ENCODE measurements at regions of chr16 and their contacts with region 1.

Region 1: DNA sequence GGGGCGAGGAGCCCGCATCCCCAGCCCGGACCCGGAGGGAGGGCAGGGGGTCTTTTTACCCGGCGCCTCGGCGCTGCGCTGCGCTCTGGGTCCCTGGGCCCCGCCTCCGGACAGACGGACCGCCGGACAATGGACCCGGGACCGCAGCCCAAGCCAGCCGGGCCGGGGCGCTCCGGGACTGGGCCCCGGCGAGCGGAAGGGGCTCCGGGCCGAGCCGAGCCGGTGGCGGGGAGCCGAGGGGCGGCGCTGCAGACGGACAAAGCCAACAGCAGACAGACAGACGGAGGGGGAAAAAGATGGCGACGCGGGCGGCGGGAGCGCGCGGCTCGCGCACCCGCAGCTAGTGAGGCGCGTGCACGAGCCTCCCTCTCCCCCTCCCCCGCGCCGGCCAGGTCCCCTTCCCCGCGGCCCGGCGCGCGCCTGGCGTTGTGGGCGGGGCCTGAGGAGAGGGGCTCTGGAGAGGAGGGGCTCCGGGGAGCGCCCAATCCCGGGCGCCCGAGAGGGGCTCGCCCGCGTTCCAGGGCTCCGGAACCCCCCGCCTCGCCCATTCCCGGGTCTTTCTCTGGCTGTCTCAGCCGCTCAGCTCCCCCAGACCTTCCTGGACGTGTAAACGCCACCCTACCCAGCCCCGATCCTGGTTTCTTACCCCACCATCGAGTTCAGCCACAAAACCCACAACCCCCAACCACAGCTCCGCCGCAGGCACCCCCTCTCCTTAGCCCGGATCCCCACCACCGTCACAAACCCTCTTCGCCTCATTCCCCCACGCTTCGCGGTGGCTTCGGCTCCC is at the start of gene ZNF821:
- DNase-seq: peak; percentile 81
- ATAC-seq: peak; percentile 48
- H3K4me3 Mint-ChIP-seq: peak within 1 kb of the TSS; percentile 90
- H3K27ac Mint-ChIP-seq: peak within 1 kb of the TSS; percentile 88
- H3K4me1 Mint-ChIP-seq: peaks cover 41% of the 10 kb centered on the region
- H3K27me3 Mint-ChIP-seq: peaks cover 31% of the 10 kb centered on the region
- total RNA-seq, gene ZNF821: 5.7 to 8.0 TPM

Region 2: GRCh38 chr16:71734511-71734910 is 149.5 kb before region 1 on chr16:
- POLR2A ChIA-PET with region 1: no interaction called
- DNase-seq: no peak
- ATAC-seq: no peak
- H3K4me3 Mint-ChIP-seq: no peak overlapping the region
- H3K27ac Mint-ChIP-seq: no peak overlapping the region
- H3K4me1 Mint-ChIP-seq: peaks cover 1% of the 10 kb centered on the region
- H3K27me3 Mint-ChIP-seq: no peaks in the 10 kb centered on the region

Region 3: GRCh38 chr16:71830359-71830758 is 53.7 kb before region 1 on chr16:
- POLR2A ChIA-PET with region 1: no interaction called
- DNase-seq: no peak
- ATAC-seq: no peak
- H3K4me3 Mint-ChIP-seq: no peak overlapping the region
- H3K27ac Mint-ChIP-seq: no peak overlapping the region
- H3K4me1 Mint-ChIP-seq: no peaks in the 10 kb centered on the region
- H3K27me3 Mint-ChIP-seq: peaks cover 2% of the 10 kb centered on the region

Region 4: GRCh38 chr16:71845639-71846430 is 38.2 kb before region 1 on chr16 and contains the start of gene ATXN1L:
- POLR2A ChIA-PET with region 1: interaction called, 16 read pairs
- DNase-seq: peak; percentile 99
- ATAC-seq: peak; percentile 98
- H3K4me3 Mint-ChIP-seq: peak within 1 kb of the TSS; percentile 94
- H3K27ac Mint-ChIP-seq: peak within 1 kb of the TSS; percentile 96
- H3K4me1 Mint-ChIP-seq: peaks cover 29% of the 10 kb centered on the region
- H3K27me3 Mint-ChIP-seq: no peaks in the 10 kb centered on the region
- total RNA-seq, gene ATXN1L: 27.8 to 28.3 TPM

Region 5: GRCh38 chr16:71853413-71853812 is 30.6 kb before region 1 on chr16:
- POLR2A ChIA-PET with region 1: interaction called, 12 read pairs
- DNase-seq: no peak
- ATAC-seq: no peak
- H3K4me3 Mint-ChIP-seq: no peak overlapping the region
- H3K27ac Mint-ChIP-seq: no peak overlapping the region
- H3K4me1 Mint-ChIP-seq: peaks cover 29% of the 10 kb centered on the region
- H3K27me3 Mint-ChIP-seq: no peaks in the 10 kb centered on the region

Region 6: GRCh38 chr16:71894921-71895678 is 11.1 kb after region 1 on chr16 and contains the start of gene IST1:
- POLR2A ChIA-PET with region 1: interaction called, 79 read pairs
- DNase-seq: peak; percentile 96
- ATAC-seq: peak; percentile 94
- H3K4me3 Mint-ChIP-seq: peak within 1 kb of the TSS; percentile 94
- H3K27ac Mint-ChIP-seq: peak within 1 kb of the TSS; percentile 95
- H3K4me1 Mint-ChIP-seq: peaks cover 15% of the 10 kb centered on the region
- H3K27me3 Mint-ChIP-seq: no peaks in the 10 kb centered on the region
- total RNA-seq, gene IST1: 228 to 248 TPM

Region 7: DNA sequence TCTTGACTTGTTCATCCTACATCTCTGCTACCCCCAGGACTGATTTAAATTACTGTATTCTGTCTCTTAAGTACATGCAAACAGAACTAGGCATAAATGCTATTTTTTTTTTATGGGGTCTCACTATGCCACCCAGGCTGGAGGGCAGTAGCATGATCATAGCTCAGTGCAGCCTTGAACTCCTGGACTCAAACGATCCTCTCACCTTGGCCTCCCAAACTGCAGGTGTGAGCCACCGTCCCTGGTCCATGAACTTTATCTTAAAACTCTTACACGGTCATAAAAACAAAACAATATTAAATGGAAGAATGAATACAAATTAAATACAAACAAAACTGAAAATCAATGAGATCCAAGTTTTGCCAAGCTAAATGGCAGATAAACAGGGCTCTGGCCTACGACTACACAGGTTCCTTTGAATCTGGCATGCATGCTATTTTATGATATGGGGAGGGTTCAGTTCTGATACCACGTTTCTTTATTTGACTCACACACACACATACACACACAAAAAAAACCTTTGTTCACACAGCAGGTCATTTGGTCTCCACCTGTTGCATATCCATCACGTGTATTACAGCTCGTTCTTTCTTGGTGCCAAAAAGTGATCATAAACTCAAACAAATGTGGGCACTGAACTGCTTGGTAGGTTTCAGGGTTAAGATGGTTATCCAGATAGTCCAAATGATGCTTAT is 117.3 kb after region 1 on chr16:
- POLR2A ChIA-PET with region 1: no interaction called
- DNase-seq: no peak
- ATAC-seq: no peak
- H3K4me3 Mint-ChIP-seq: no peak overlapping the region
- H3K27ac Mint-ChIP-seq: no peak overlapping the region
- H3K4me1 Mint-ChIP-seq: peaks cover 16% of the 10 kb centered on the region
- H3K27me3 Mint-ChIP-seq: peaks cover 26% of the 10 kb centered on the region

Measured in activated naive CD8-positive, alpha-beta T cell treated with anti-CD3 and anti-CD28 coated beads, Interleukin-2, amount 10 ng/mL, durations not matched to agents 7 days and 5 days (primary cell).